ENCODE measurements at regions of chr2 and their contacts with region 1.

Region 1: GRCh38 chr2:38508311-38509039 is 94.3 kb downstream of the HNRNPLL start:
- DNase-seq: peak; percentile 94
- ATAC-seq: peak; percentile 86
- H3K4me3 Mint-ChIP-seq: no peak overlapping the region
- H3K27ac Mint-ChIP-seq: no peak overlapping the region
- H3K4me1 Mint-ChIP-seq: peaks cover 3% of the 10 kb centered on the region
- H3K27me3 Mint-ChIP-seq: peaks cover 7% of the 10 kb centered on the region
- CTCF ChIP-seq: peak; percentile 86

Region 2: DNA sequence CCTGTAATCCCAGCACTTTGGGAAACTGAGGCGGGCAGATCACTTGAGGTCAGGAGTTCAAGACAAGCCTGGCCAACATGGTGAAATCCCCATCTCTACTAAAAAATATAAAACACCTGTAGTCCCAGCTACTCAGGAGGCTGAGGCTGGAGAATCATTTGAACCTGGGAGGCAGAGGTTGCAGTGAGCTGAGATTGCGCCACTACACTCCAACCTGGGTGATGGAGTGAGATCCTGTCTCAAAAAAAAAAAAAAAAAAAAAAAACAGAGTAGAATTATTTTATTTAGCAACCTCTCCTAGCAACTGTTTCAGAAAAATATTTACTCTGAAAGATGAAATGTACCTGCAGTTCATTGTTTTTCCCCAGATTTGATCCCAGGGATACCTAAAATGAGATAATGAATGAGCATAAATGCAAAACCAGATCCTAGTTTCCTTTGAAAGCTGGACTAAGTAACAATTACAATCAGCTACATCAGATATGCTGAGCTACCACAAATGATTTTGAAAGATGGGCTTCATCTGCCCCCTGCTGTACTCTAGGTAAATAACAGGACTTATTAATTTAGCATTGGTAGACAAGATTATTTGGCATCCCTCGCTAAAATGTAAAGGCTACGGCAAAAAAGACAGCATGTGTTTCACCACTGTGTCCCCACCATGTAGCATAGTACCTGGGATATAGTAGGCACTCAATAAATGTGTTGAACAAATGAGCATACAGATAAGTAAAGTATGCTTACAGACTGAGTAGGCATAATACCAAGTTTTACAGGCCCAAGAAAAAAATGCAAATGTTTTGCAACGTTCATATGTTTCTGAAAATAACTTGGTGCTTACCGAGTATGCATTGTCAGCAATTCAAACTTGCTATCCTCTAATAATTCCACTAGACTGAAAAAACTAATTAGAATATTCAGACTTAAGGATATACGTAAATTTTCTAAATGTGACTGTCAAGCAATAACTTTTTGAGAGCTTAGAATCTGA is 233.9 kb before region 1 on chr2:
- CTCF ChIA-PET with region 1: interaction called, 10 read pairs
- POLR2A ChIA-PET with region 1: no interaction called
- intact Hi-C with region 1: no loop called
- DNase-seq: peak; percentile 47
- ATAC-seq: peak; percentile 72
- H3K4me3 Mint-ChIP-seq: no peak overlapping the region
- H3K27ac Mint-ChIP-seq: no peak overlapping the region
- H3K4me1 Mint-ChIP-seq: no peaks in the 10 kb centered on the region
- H3K27me3 Mint-ChIP-seq: no peaks in the 10 kb centered on the region
- CTCF ChIP-seq: peak; percentile 56

Region 3: DNA sequence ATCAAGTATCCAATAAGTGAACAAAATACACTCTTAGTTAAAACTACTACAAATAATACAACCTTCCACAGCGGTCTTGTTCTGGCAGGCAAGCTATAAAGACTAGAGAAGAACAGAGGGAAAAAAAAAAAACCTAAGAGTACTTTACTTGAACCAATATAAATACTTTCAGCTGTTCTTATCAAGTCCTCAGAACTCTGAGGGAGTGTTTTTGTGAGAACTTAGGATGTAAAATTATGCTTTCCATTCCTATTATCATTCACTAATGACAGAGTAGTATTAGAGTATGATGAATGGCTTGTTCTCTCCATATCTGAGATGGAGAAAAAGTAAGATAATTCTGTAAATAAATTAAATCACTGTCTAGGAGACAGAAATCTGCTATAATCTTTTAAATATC is 199.7 kb before region 1 on chr2:
- CTCF ChIA-PET with region 1: interaction called, 23 read pairs
- POLR2A ChIA-PET with region 1: no interaction called
- intact Hi-C with region 1: no loop called
- DNase-seq: no peak
- ATAC-seq: no peak
- H3K4me3 Mint-ChIP-seq: no peak overlapping the region
- H3K27ac Mint-ChIP-seq: no peak overlapping the region
- H3K4me1 Mint-ChIP-seq: peaks cover 17% of the 10 kb centered on the region
- H3K27me3 Mint-ChIP-seq: no peaks in the 10 kb centered on the region
- CTCF ChIP-seq: no peak

Region 4: DNA sequence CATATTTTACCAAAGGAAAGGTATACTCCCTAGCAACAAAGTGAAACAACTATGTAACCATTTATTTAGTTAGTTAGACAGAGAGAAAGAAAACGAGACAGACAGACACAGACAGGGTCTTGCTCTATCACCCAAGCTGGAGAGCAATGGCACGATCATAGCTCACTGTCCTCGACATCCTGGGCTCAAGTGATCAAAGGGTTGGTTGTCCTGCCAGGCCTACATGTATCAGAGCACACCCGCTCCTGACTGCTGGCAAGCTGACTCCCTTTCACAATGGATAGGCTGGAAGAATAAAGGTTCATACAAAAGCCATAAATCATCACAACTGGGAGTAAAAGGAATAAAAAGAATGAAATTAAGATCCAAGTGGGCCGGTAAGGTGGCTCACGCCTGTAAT is 184.9 kb before region 1 on chr2:
- CTCF ChIA-PET with region 1: interaction called, 16 read pairs
- POLR2A ChIA-PET with region 1: interaction called, 3 read pairs
- intact Hi-C with region 1: no loop called
- DNase-seq: no peak
- ATAC-seq: no peak
- H3K4me3 Mint-ChIP-seq: no peak overlapping the region
- H3K27ac Mint-ChIP-seq: no peak overlapping the region
- H3K4me1 Mint-ChIP-seq: peaks cover 40% of the 10 kb centered on the region
- H3K27me3 Mint-ChIP-seq: no peaks in the 10 kb centered on the region
- CTCF ChIP-seq: no peak

Region 5: GRCh38 chr2:38465789-38466127 is 42.7 kb before region 1 on chr2:
- CTCF ChIA-PET with region 1: interaction called, 11 read pairs
- POLR2A ChIA-PET with region 1: no interaction called
- intact Hi-C with region 1: no loop called
- DNase-seq: peak; percentile 16
- ATAC-seq: no peak
- H3K4me3 Mint-ChIP-seq: no peak overlapping the region
- H3K27ac Mint-ChIP-seq: no peak overlapping the region
- H3K4me1 Mint-ChIP-seq: peaks cover 9% of the 10 kb centered on the region
- H3K27me3 Mint-ChIP-seq: no peaks in the 10 kb centered on the region
- CTCF ChIP-seq: peak; percentile 43

Region 6: DNA sequence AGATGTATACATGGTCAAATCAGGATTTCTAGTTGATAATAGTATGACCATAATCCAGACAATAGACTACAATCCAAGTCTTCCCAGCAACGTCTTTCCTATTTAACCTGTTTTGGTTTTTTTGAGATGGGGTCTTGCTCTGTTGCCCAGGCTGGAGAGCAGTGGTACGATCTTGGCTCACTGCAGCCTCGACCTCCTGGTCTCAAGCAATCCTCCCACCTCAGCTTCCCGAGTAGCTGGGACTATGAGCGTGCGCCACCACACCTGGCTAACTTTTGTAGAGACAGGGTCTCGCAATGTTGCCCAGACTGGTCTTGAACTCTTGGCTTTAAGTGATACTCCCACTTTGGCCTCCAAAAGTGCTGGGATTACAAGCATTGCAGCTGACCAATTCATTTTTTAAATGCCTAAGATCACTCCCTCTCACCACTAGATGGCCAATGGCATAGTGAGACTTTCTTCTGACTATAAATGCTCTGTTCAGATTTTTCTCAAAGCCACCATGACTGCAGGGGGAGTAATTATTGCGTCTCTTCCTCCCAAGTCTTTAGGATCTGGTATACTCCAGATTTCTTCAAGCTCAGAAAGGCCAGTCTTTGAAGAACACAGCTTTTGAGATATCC is 46.6 kb after region 1 on chr2:
- CTCF ChIA-PET with region 1: no interaction called
- POLR2A ChIA-PET with region 1: no interaction called
- intact Hi-C with region 1: no loop called
- DNase-seq: no peak
- ATAC-seq: no peak
- H3K4me3 Mint-ChIP-seq: no peak overlapping the region
- H3K27ac Mint-ChIP-seq: no peak overlapping the region
- H3K4me1 Mint-ChIP-seq: peaks cover 19% of the 10 kb centered on the region
- H3K27me3 Mint-ChIP-seq: no peaks in the 10 kb centered on the region
- CTCF ChIP-seq: peak; percentile 40

Region 7: DNA sequence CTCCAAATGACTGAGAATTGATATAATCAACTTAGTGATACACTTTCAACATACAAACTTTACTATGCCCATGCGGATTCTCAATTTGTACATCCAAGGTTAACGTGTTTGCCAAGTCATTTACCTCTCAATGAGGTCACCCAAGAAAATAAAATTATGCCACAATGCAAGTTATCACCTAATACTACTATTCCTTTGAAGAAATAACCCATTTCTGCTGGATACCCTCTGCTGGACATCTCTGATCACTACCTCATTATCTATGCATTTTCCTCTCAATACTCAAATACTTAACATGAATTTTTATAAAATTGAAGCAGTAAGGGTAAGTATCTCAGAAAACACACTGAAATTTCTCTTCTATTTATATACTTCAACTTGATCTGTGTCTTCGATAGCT is 81.6 kb after region 1 on chr2:
- CTCF ChIA-PET with region 1: no interaction called
- POLR2A ChIA-PET with region 1: no interaction called
- intact Hi-C with region 1: no loop called
- DNase-seq: no peak
- ATAC-seq: no peak
- H3K4me3 Mint-ChIP-seq: no peak overlapping the region
- H3K27ac Mint-ChIP-seq: peak overlapping the region; percentile 10
- H3K4me1 Mint-ChIP-seq: peaks cover 41% of the 10 kb centered on the region
- H3K27me3 Mint-ChIP-seq: no peaks in the 10 kb centered on the region
- CTCF ChIP-seq: peak; percentile 50

Measured in activated CD8-positive, alpha-beta T cell treated with anti-CD3 and anti-CD28 coated beads for 36 hours (primary cell).